ENCODE measurements at regions of chrX and their contacts with region 1.

Region 1: DNA sequence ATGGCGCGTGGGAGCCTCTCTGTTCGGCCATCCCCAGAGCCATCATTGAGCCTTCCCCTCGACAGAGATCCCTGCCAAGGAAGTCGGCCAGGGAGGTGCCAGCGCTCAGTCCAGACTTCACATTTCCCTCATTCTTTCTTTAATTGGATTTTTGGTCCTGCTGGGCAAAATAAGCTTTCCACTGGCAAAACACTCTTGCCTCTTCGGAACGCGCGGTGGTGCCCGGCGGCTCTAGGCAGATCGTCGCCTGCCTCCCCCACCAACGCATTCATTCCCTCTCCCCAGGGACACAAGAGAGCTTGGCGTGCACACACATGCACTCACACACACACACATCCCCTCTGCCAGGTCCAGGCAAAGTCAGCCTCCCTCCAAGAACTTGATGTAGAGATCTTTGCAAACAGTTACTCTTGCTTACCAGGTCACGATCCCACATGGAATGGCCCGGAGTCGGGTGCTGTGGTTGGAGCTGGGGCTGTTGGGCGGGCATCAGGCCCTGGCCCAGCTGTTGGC is 257.1 kb downstream of the BCOR start:
- DNase-seq: no peak
- H3K4me3 ChIP-seq: no peak overlapping the region
- H3K27ac ChIP-seq: no peak overlapping the region
- H3K4me1 ChIP-seq: peaks cover 0 to 6% (median 5%) of the 10 kb centered on the region in 4 experiments; a peak in 3 of 7 replicates
- H3K27me3 ChIP-seq: 0 out of 7 replicates have a peak, but pooled peaks cover 0 to 2% (median 0%) of the 10 kb centered on the region in 4 experiments
- CTCF ChIP-seq: no peak
- EP300 ChIP-seq: no peak
- POLR2A ChIP-seq: no peak
- RAD21 ChIP-seq: no peak

Region 2: GRCh38 chrX:39814391-39814790 is 26.2 kb before region 1 on chrX:
- CTCF ChIA-PET with region 1: interaction called, 13 read pairs
- POLR2A ChIA-PET with region 1: interaction called, 15 read pairs
- DNase-seq: no peak
- H3K4me3 ChIP-seq: no peak overlapping the region
- H3K27ac ChIP-seq: no peak overlapping the region
- H3K4me1 ChIP-seq: peaks cover 7 to 29% (median 23%) of the 10 kb centered on the region in 4 experiments
- H3K27me3 ChIP-seq: peaks cover 0 to 1% (median 0%) of the 10 kb centered on the region in 4 experiments; a peak in 1 of 7 replicates
- CTCF ChIP-seq: peak in 2 of 3 experiments; percentile 30 to 46; a peak in 2 of 4 replicates
- EP300 ChIP-seq: no peak
- POLR2A ChIP-seq: no peak
- RAD21 ChIP-seq: peak; percentile 63 to 74

Region 3: GRCh38 chrX:39827951-39828350 is 12.7 kb before region 1 on chrX:
- CTCF ChIA-PET with region 1: interaction called, 28 read pairs
- POLR2A ChIA-PET with region 1: no interaction called
- DNase-seq: no peak
- H3K4me3 ChIP-seq: no peak overlapping the region
- H3K27ac ChIP-seq: no peak overlapping the region
- H3K4me1 ChIP-seq: peaks cover 0 to 3% (median 0%) of the 10 kb centered on the region in 4 experiments; a peak in 2 of 7 replicates
- H3K27me3 ChIP-seq: peaks cover 0 to 5% (median 2%) of the 10 kb centered on the region in 4 experiments; a peak in 1 of 7 replicates
- CTCF ChIP-seq: no peak
- EP300 ChIP-seq: no peak
- POLR2A ChIP-seq: no peak
- RAD21 ChIP-seq: no peak